CD4-positive, alpha-beta memory T cell (primary cell): ENCODE measurements at regions of chr7 and their contacts with region 1.

Region 1: GRCh38 chr7:27150568-27151340 is 1.6 kb downstream of the HOXA3 start:
- DNase-seq: peak; percentile 57 to 68 (median 65)
- H3K4me3 ChIP-seq: peak overlapping the region in 1 of 2 donors; percentile 36
- H3K4me3 Mint-ChIP-seq: peak overlapping the region; percentile 74 to 92 (median 83)
- H3K27ac ChIP-seq: no peak overlapping the region
- H3K27ac Mint-ChIP-seq: peak overlapping the region in 2 of 7 donors; percentile 48 to 69
- H3K4me1 ChIP-seq: peaks cover 42% of the 10 kb centered on the region
- H3K4me1 Mint-ChIP-seq: peaks cover 24 to 61% (median 43%) of the 10 kb centered on the region in 4 donors
- H3K27me3 ChIP-seq: peaks cover 93% of the 10 kb centered on the region
- H3K27me3 Mint-ChIP-seq: peaks cover 78 to 81% of the 10 kb centered on the region in 2 donors

Region 2: GRCh38 chr7:25250386-25250785 is 1900.4 kb before region 1 on chr7:
- CTCF ChIA-PET with region 1: no interaction called
- POLR2A ChIA-PET with region 1: no interaction called
- intact Hi-C with region 1: loop called (anchors 5 kb)
- DNase-seq: no peak
- H3K4me3 ChIP-seq: no peak overlapping the region
- H3K4me3 Mint-ChIP-seq: no peak overlapping the region
- H3K27ac ChIP-seq: no peak overlapping the region
- H3K27ac Mint-ChIP-seq: no peak overlapping the region
- H3K4me1 ChIP-seq: no peaks in the 10 kb centered on the region
- H3K4me1 Mint-ChIP-seq: no peaks in the 10 kb centered on the region
- H3K27me3 ChIP-seq: no peaks in the 10 kb centered on the region
- H3K27me3 Mint-ChIP-seq: peaks cover 6 to 14% of the 10 kb centered on the region in 2 donors

Region 3: GRCh38 chr7:26556071-26556881 is 594.5 kb before region 1 on chr7:
- CTCF ChIA-PET with region 1: no interaction called
- POLR2A ChIA-PET with region 1: no interaction called
- intact Hi-C with region 1: no loop called
- DNase-seq: no peak
- H3K4me3 ChIP-seq: no peak overlapping the region
- H3K4me3 Mint-ChIP-seq: no peak overlapping the region
- H3K27ac ChIP-seq: no peak overlapping the region
- H3K27ac Mint-ChIP-seq: no peak overlapping the region
- H3K4me1 ChIP-seq: no peaks in the 10 kb centered on the region
- H3K4me1 Mint-ChIP-seq: peaks cover 0 to 1% (median 0%) of the 10 kb centered on the region in 4 donors
- H3K27me3 ChIP-seq: no peaks in the 10 kb centered on the region
- H3K27me3 Mint-ChIP-seq: peaks cover 1 to 15% of the 10 kb centered on the region in 2 donors

Region 4: DNA sequence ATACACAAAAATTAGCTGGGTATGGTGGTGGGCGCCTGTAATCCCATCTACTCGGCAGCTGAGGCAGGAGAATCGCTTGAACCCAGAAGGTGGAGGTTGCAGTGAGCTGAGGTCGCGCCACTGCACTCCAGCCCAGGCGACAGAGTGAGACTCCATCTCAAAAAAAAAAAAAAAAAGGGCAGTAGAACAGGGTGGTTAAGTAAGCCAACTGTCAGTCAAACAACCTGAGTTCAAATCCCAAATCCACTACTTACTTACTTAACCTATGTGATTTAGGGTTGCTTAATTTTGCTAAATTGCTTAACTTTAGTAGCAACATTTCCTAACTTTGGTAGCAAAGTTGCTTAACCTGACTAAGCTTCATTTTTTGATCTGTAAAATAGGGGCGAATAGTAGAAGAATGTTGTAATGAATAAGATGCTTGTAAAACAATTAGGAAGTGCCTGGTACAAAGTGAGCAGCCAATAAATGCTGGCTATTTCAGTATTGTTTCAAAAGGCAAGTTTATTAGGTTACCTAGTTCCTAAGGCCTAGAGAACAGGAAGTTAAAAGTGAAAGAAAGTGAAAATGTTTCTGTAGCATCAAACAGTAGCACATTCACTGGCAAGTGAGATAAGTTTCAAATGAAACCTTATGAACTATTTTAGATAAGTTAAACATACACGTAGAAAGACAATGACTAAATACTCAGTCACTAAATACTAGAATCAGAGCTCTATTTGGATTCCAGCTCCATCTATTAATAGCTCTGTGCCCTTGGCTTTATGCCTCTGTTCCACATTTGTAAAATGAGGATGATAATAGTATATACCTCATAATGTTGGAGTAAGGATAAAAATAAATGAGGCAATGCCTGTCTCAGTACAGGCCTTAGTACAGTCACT is 119.2 kb before region 1 on chr7:
- CTCF ChIA-PET with region 1: no interaction called
- POLR2A ChIA-PET with region 1: no interaction called
- intact Hi-C with region 1: loop called (anchors 5 kb)
- DNase-seq: peak in 4 of 5 donors; percentile 15 to 24 (median 17)
- H3K4me3 ChIP-seq: peak overlapping the region in 1 of 2 donors; percentile 27
- H3K4me3 Mint-ChIP-seq: peak overlapping the region in 7 of 8 donors; percentile 25 to 75 (median 52)
- H3K27ac ChIP-seq: no peak overlapping the region
- H3K27ac Mint-ChIP-seq: peak overlapping the region; percentile 62 to 93 (median 87)
- H3K4me1 ChIP-seq: peaks cover 13% of the 10 kb centered on the region
- H3K4me1 Mint-ChIP-seq: peaks cover 13 to 27% (median 14%) of the 10 kb centered on the region in 4 donors
- H3K27me3 ChIP-seq: no peaks in the 10 kb centered on the region
- H3K27me3 Mint-ChIP-seq: no peaks in the 10 kb centered on the region